Stomach (tissue), 19 donors: ENCODE measurements at regions of chr19 and their contacts with region 1.

Region 1: DNA sequence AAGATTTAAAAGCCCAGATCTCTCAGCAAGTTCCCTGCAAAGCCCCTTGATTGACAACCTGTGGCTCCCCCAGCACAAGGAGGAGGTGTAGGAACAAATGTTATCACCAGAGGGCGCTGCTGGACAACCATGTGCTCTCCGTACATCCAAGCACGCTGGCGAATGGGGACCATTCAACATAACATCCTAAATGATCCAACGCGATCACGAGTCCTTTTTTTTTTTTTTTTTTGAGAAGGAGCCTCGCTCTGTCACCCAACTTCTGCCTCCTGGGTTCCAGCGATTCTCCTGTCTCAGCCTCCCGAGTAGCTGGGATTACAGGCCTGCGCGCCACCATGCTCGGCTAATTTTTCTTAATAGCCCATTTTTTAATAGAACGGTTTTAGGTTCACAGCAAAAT is 52.0 kb downstream of the NWD1 start:
- DNase-seq: peak; percentile 83 to 93
- H3K4me3 ChIP-seq: no peak overlapping the region
- H3K27ac ChIP-seq: no peak overlapping the region
- H3K4me1 ChIP-seq: no peaks in the 10 kb centered on the region
- H3K27me3 ChIP-seq: no peaks in the 10 kb centered on the region
- CTCF ChIP-seq: peak in 5 of 7 experiments; percentile 74 to 91 (median 86)
- EP300 ChIP-seq: no peak
- POLR2A ChIP-seq: no peak

Region 2: DNA sequence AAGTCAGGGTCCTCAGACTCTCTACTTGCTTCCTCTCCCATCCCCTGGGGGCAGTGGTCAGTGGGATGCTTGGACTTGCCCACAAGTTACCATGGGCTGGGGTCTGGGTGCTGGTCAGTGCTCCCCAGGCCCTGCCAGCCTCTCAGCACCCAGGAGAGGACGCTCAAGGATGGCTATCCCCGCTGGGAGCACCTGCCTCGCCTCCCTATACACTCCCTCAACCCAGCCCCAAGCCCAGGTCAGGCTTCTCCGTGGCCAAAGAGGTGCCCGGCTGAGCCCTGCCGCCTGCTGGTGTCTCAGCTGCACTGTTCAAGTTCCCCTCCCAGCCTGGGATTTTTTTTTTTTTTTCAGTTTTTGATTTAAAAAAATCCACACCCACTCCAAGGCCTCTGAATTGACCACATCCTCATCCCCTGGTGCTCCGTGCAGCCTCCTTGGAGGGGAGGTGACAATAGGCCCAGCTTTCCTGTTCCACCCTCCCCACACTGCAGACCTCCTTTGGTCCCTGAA is 128.0 kb after region 1 on chr19:
- intact Hi-C with region 1: loop called (anchors 10 kb)
- DNase-seq: peak; percentile 45 to 46
- H3K4me3 ChIP-seq: no peak overlapping the region
- H3K27ac ChIP-seq: no peak overlapping the region
- H3K4me1 ChIP-seq: peaks cover 3 to 29% (median 23%) of the 10 kb centered on the region in 4 donors
- H3K27me3 ChIP-seq: peaks cover 0 to 21% (median 5%) of the 10 kb centered on the region in 3 donors
- CTCF ChIP-seq: peak in 4 of 7 experiments; percentile 15 to 49 (median 32)
- EP300 ChIP-seq: no peak
- POLR2A ChIP-seq: no peak

Region 3: GRCh38 chr19:16957855-16958254 is 186.2 kb after region 1 on chr19:
- intact Hi-C with region 1: no loop called
- DNase-seq: no peak
- H3K4me3 ChIP-seq: no peak overlapping the region
- H3K27ac ChIP-seq: no peak overlapping the region
- H3K4me1 ChIP-seq: peaks cover 0 to 14% (median 7%) of the 10 kb centered on the region in 4 donors
- H3K27me3 ChIP-seq: peaks cover 0 to 8% (median 0%) of the 10 kb centered on the region in 3 donors
- CTCF ChIP-seq: no peak
- EP300 ChIP-seq: no peak
- POLR2A ChIP-seq: no peak

Region 4: GRCh38 chr19:17052439-17053210 is 281.0 kb after region 1 on chr19:
- intact Hi-C with region 1: loop called (anchors 5 kb)
- DNase-seq: peak; percentile 32 to 78
- H3K4me3 ChIP-seq: no peak overlapping the region
- H3K27ac ChIP-seq: no peak overlapping the region
- H3K4me1 ChIP-seq: no peaks in the 10 kb centered on the region
- H3K27me3 ChIP-seq: no peaks in the 10 kb centered on the region
- CTCF ChIP-seq: peak in 5 of 7 experiments; percentile 11 to 54 (median 51)
- EP300 ChIP-seq: no peak
- POLR2A ChIP-seq: no peak